PC-9 (cell line): ENCODE measurements at regions of chr2 and their contacts with region 1.

Region 1: GRCh38 chr2:64203858-64204632 is 59.8 kb upstream of the PELI1 start:
- DNase-seq: peak; percentile 71 to 97
- H3K4me3 ChIP-seq: peak overlapping the region; percentile 40; the same call in 1 of the 2 replicates
- H3K27ac ChIP-seq: peak overlapping the region; percentile 93
- H3K4me1 ChIP-seq: peaks cover 45% of the 10 kb centered on the region
- H3K27me3 ChIP-seq: no peaks in the 10 kb centered on the region
- CTCF ChIP-seq: no peak

Region 2: GRCh38 chr2:64062829-64063228 is 141.2 kb before region 1 on chr2:
- CTCF ChIA-PET with region 1: no interaction called
- POLR2A ChIA-PET with region 1: interaction called, 14 read pairs
- intact Hi-C with region 1: no loop called
- DNase-seq: peak; percentile 34 to 88
- H3K4me3 ChIP-seq: no peak overlapping the region
- H3K27ac ChIP-seq: no peak overlapping the region
- H3K4me1 ChIP-seq: peaks cover 19% of the 10 kb centered on the region
- H3K27me3 ChIP-seq: no peaks in the 10 kb centered on the region
- CTCF ChIP-seq: no peak

Region 3: DNA sequence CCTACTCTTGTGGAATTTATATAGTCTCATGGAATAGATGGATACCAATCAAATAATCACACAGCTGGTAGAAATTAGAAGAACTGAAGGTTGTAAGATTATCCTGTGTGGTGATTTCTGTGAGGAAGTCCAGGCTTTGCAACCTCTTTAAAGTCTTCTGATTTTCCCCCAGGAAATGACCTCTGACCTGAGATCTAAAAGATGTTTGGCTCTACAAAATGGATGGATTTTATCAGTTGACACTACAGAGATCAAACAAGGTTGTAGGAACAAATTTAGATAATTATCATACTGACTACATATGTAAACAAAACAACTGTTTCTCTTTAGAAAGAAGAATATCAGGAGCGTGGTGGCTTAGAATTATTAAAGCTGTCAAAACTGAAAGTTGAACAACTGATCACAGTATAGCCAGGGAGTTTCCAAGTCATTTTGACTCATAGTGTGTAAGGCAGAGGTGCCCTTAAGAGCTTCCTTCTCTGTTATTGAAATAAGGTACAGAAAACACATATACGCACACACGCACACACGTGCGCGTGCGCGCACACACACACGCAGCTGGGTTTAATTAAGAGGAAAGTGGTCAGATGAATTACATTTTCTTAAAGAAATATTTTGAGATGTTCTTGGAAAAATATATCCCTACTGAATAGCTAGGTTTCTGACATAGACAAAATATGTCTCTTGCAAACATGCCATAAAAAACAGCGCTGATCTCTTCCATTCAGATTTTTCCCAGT is 24.3 kb before region 1 on chr2:
- CTCF ChIA-PET with region 1: no interaction called
- POLR2A ChIA-PET with region 1: no interaction called
- intact Hi-C with region 1: no loop called
- DNase-seq: no peak
- H3K4me3 ChIP-seq: no peak overlapping the region
- H3K27ac ChIP-seq: no peak overlapping the region
- H3K4me1 ChIP-seq: 0 out of 2 replicates have a peak, but pooled peaks cover 4% of the 10 kb centered on the region
- H3K27me3 ChIP-seq: no peaks in the 10 kb centered on the region
- CTCF ChIP-seq: no peak

Region 4: DNA sequence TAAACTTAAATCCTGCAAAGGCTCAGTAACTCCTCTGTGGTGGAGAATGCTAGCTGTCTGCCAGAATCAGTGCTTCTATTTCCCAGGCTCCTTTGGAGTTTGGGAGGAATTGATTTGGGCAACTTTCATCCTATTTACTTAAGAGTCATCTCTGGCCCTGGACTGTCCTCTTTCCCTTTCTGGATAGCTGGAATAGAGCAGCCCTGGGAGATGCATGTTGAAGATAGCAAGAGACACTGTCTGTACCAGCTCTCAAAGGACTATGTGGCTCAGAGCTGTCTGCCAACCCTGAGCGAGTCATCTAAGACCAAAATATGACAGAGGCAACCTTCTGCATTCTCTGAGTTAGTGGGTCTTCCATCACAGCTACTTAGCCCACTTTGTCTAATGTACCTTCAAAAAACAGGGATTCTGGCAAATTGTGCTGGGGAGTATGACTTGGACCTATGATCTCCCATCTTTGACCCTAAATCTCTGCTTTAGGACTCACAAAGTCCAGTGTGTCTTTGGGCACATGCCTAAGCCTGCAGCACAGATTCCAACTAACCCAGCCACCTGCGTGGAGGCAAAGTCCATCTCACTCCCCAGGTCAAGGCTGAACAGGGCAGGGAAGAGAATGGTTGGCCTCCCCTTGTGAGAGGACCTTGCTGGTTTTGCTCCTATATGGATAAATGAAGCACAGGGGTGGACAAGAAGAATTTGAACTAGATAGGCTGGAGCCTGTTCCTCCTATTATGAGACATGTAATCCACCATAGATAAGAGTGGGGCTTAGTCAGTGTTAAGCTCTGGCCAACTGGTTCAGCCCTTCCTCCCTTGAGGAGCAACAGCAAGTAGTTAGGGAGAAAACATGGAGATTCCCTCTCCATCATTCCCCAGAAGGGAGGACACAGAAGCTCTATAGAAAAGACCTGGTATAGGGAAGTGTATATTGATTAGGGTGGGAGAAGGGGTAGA is 39.3 kb after region 1 on chr2:
- CTCF ChIA-PET with region 1: no interaction called
- POLR2A ChIA-PET with region 1: no interaction called
- intact Hi-C with region 1: no loop called
- DNase-seq: peak in 1 of 2 experiments; percentile 19
- H3K4me3 ChIP-seq: no peak overlapping the region
- H3K27ac ChIP-seq: 0 out of 2 replicates have a peak overlapping the region, but pooled peaks have one; percentile 15
- H3K4me1 ChIP-seq: peaks cover 14% of the 10 kb centered on the region
- H3K27me3 ChIP-seq: no peaks in the 10 kb centered on the region
- CTCF ChIP-seq: no peak